ENCODE measurements at regions of chr18 and their contacts with region 1.

Region 1: DNA sequence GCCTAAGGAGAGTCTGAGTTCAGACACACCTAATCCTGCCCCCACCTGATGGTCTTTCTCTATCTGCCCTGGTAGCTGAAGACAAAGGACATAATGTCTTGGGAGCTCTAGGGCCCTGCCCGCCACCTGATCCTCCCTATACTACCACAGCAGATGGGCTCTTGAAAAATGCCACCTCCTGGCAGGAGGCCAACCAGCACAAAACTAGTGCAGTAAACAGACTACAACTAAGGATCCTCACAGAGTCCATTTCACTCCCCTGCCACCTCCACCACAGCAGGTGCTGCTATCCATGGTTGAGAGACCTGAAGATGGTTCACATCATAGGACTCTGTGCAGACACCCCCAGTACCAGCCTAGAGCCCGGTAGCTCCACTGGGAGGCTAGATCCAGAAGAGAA is 52.5 kb upstream of the LDLRAD4 start:
- DNase-seq: no peak
- ATAC-seq: no peak

Region 2: DNA sequence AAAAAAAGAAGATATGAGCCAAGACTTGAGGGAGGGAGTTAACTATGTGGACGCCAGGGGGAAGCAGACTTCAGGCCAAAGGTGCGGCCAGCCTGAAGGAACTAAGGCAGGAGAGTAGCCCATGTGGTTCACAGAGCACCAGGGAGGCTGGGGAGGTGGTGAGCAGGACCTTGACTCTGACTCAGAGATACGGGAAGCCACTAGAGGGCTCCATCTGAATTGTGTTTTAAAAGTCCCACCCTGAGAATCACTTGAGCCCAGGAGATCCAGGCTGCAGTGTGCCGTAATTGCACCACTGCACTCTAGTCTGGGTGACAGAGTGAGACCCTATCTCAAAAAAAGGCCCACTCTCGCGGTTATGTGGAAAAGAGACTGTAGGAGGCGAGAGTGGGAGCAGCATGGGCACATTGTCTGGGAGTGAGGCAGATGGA is 162.5 kb before region 1 on chr18:
- intact Hi-C with region 1: loop called (anchors 10 kb)
- DNase-seq: no peak
- ATAC-seq: peak; percentile 84